ENCODE measurements at regions of chr17 and their contacts with region 1.

Region 1: DNA sequence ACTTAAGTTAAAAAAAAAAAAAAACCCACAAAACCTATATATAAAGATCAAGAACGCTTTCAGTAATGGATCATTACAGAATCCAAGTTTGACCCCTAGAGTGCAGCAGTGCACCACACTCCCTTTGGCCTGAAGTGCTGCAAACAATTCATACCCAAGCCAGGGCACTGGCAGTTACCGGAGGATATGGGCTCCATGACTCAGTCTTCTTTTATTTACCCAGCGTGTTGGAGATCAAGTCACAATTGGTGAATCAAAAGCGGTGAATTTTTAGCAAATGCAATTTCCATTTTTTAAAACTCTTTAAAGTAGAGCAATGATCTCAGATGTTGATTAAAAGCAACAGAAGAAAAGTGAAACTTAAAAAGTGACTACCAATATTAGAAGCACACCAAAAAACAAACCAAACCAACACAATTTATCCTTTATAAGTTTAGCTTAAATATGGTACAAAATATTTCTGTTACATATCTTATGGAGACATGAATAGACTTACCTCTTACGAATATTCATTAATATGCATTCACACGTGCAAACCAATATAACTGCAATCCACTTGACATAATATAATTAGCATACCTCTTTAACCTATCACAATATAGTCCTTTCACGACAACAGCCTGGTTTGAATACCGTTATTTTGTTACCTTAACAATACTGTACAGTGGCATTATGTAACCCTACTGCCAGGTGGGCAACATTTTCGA is 46.3 kb downstream of the ZNF652 start:
- DNase-seq: peak; percentile 79
- H3K4me3 ChIP-seq: peak overlapping the region in 1 of 4 donors; percentile 4
- H3K27ac ChIP-seq: peak overlapping the region in 1 of 4 donors; percentile 32
- H3K4me1 ChIP-seq: peaks cover 0 to 13% (median 0%) of the 10 kb centered on the region in 4 donors
- H3K27me3 ChIP-seq: no peaks in the 10 kb centered on the region
- CTCF ChIP-seq: peak; percentile 74 to 86 (median 84)
- EP300 ChIP-seq: no peak
- POLR2A ChIP-seq: no peak

Region 2: GRCh38 chr17:49117587-49118230 is 198.0 kb before region 1 on chr17:
- in situ Hi-C with region 1: no loop called
- intact Hi-C with region 1: no loop called
- DNase-seq: peak; percentile 51
- H3K4me3 ChIP-seq: no peak overlapping the region
- H3K27ac ChIP-seq: peak overlapping the region; percentile 66 to 78 (median 76)
- H3K4me1 ChIP-seq: peaks cover 0 to 38% (median 12%) of the 10 kb centered on the region in 4 donors
- H3K27me3 ChIP-seq: peaks cover 5% of the 10 kb centered on the region
- CTCF ChIP-seq: no peak
- EP300 ChIP-seq: no peak
- POLR2A ChIP-seq: no peak

Region 3: GRCh38 chr17:49388290-49388640 is 72.6 kb after region 1 on chr17:
- in situ Hi-C with region 1: loop called in 1 of 4 experiments (anchors 10 kb)
- intact Hi-C with region 1: no loop called
- DNase-seq: peak; percentile 23
- H3K4me3 ChIP-seq: no peak overlapping the region
- H3K27ac ChIP-seq: peak overlapping the region in 3 of 4 donors; percentile 6 to 71 (median 61)
- H3K4me1 ChIP-seq: peaks cover 12 to 34% (median 15%) of the 10 kb centered on the region in 4 donors
- H3K27me3 ChIP-seq: no peaks in the 10 kb centered on the region
- CTCF ChIP-seq: no peak
- EP300 ChIP-seq: no peak
- POLR2A ChIP-seq: no peak

Region 4: GRCh38 chr17:49393491-49394255 is 78.0 kb after region 1 on chr17:
- in situ Hi-C with region 1: loop called (anchors 5 to 10 kb)
- intact Hi-C with region 1: loop called (anchors 2 kb)
- DNase-seq: no peak
- H3K4me3 ChIP-seq: no peak overlapping the region
- H3K27ac ChIP-seq: no peak overlapping the region
- H3K4me1 ChIP-seq: peaks cover 12 to 36% (median 17%) of the 10 kb centered on the region in 4 donors
- H3K27me3 ChIP-seq: no peaks in the 10 kb centered on the region
- CTCF ChIP-seq: no peak
- EP300 ChIP-seq: no peak
- POLR2A ChIP-seq: no peak

Region 5: GRCh38 chr17:49399995-49400394 is 84.3 kb after region 1 on chr17:
- in situ Hi-C with region 1: loop called in 3 of 4 experiments (anchors 5 kb)
- intact Hi-C with region 1: loop called (anchors 2 kb)
- DNase-seq: no peak
- H3K4me3 ChIP-seq: no peak overlapping the region
- H3K27ac ChIP-seq: no peak overlapping the region
- H3K4me1 ChIP-seq: no peaks in the 10 kb centered on the region
- H3K27me3 ChIP-seq: no peaks in the 10 kb centered on the region
- CTCF ChIP-seq: no peak
- EP300 ChIP-seq: no peak
- POLR2A ChIP-seq: no peak

Measured in transverse colon (tissue), 4 donors.